ENCODE measurements at regions of chr1 and their contacts with region 1.

Region 1: DNA sequence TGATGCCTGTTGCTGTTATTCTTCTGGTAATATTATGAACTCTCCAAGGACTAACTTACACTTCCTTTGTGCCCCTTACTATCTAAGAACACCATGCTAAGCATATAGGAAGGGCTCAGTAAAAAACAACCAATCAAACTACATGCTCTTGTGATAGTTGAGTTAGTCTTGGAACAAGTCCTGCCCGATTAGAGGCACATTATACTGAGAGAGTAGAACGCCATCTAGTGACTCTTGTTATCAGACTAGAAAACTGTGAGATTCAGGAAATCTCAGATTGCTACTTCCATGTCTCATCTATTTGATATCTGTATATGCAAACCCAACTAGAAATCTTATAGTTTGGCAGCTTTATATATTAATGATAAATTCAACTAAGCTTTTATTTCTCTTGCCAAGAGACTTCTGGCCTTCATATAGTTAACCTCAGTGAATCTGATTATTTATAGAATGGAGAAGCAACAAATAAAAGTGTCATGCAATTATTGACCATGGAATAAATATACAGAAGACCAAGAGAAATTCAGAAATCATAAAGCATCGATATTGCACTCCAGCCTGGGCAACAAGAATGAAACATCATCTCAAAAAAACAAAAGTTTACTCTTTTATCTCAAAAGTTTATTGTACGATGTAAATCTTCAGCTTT is 7.8 kb upstream of the SRRM1 start:
- DNase-seq: no peak
- ATAC-seq: peak; percentile 48 to 81 (median 66)
- H3K4me3 ChIP-seq: no peak overlapping the region
- H3K27ac ChIP-seq: no peak overlapping the region
- H3K4me1 ChIP-seq: peaks cover 0 to 3% (median 0%) of the 10 kb centered on the region in 9 donors
- H3K27me3 ChIP-seq: peaks cover 0 to 20% (median 0%) of the 10 kb centered on the region in 7 donors
- CTCF ChIP-seq: peak; percentile 21 to 75 (median 63)

Region 2: GRCh38 chr1:23496490-23497181 is 1138.7 kb before region 1 on chr1:
- intact Hi-C with region 1: loop called in 1 of 10 experiments (anchors 5 kb)
- DNase-seq: no peak
- ATAC-seq: peak in 6 of 8 donors; percentile 18 to 40 (median 30)
- H3K4me3 ChIP-seq: no peak overlapping the region
- H3K27ac ChIP-seq: no peak overlapping the region
- H3K4me1 ChIP-seq: peaks cover 0 to 9% (median 0%) of the 10 kb centered on the region in 9 donors
- H3K27me3 ChIP-seq: no peaks in the 10 kb centered on the region
- CTCF ChIP-seq: no peak

Region 3: DNA sequence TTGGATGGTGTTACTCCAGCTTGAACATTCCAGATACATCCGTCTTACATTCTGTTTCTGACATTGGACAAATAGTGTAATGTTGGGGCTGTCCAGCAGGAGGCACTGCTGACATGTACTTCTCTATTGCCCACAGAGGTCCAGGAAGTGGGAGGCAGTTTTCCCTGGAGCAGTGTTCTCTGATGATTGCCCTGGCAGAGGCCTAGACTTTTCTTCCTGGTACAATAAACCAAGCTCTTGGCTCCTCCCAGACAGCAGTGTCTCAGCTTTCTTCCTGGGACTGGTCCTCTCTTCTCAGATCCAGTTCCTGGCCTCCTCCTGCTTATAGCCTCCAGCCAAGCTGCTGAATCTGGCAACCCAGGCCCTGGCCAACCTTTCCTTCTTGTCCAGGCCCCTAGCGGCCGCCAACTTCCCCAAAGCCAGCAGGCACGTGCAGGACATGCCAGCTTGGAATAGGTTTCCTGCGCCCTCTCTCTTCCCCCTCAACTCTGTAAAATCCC is 433.3 kb before region 1 on chr1:
- intact Hi-C with region 1: loop called in 9 of 10 experiments (anchors 1 to 10 kb)
- DNase-seq: peak; percentile 44 to 79
- ATAC-seq: peak; percentile 68 to 86 (median 72)
- H3K4me3 ChIP-seq: no peak overlapping the region
- H3K27ac ChIP-seq: peak overlapping the region in 1 of 10 donors; percentile 42
- H3K4me1 ChIP-seq: peaks cover 0 to 17% (median 4%) of the 10 kb centered on the region in 9 donors
- H3K27me3 ChIP-seq: peaks cover 0 to 20% (median 0%) of the 10 kb centered on the region in 7 donors
- CTCF ChIP-seq: peak; percentile 57 to 86 (median 77)

Region 4: GRCh38 chr1:24391882-24392603 is 243.3 kb before region 1 on chr1:
- intact Hi-C with region 1: loop called in 3 of 10 experiments (anchors 5 to 10 kb)
- DNase-seq: peak; percentile 48 to 55
- ATAC-seq: peak; percentile 81 to 91 (median 88)
- H3K4me3 ChIP-seq: peak overlapping the region in 7 of 10 donors; percentile 11 to 36 (median 25)
- H3K27ac ChIP-seq: peak overlapping the region in 9 of 10 donors; percentile 57 to 85 (median 78)
- H3K4me1 ChIP-seq: peaks cover 0 to 31% (median 15%) of the 10 kb centered on the region in 9 donors
- H3K27me3 ChIP-seq: no peaks in the 10 kb centered on the region
- CTCF ChIP-seq: peak; percentile 43 to 79 (median 71)

Region 5: DNA sequence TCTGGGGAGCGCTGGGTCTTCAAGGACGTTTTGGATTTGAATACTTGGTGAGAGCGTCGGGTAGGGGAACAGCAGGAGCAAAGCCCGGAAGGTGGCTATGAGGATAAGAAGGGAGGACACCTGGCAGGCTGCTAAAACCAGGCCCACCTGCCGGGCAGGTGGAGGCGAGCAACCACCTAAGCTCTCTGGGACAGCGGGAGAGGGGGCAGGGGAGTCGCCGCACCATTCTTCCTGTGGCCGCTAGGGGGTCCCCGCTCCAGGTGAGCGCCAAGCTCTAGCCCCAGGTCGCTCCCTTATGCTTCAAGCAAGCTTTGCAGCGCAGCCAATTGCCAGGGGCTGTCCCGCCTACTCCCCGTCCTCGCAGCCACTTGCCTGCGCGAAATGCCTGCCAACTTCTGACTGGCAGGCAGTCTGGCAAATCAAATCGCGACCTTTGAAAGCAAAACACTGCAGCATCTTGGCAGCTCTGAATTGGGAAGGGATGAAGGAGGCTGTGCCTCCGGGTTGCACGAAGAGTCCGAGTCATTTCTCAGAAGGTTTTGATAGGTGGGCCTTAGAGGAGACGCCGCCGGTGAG is 219.9 kb before region 1 on chr1 and contains the start of gene NIPAL3:
- intact Hi-C with region 1: loop called in 6 of 10 experiments (anchors 10 kb)
- DNase-seq: peak; percentile 96 to 99
- ATAC-seq: peak; percentile 94 to 98 (median 96)
- H3K4me3 ChIP-seq: peak within 1 kb of the TSS; percentile 50 to 84 (median 74)
- H3K27ac ChIP-seq: peak within 1 kb of the TSS in 8 of 10 donors; percentile 3 to 75 (median 33)
- H3K4me1 ChIP-seq: peaks cover 7 to 51% (median 27%) of the 10 kb centered on the region in 9 donors
- H3K27me3 ChIP-seq: no peaks in the 10 kb centered on the region
- CTCF ChIP-seq: peak; percentile 77 to 83 (median 81)
- total RNA-seq, gene NIPAL3: 21.5 to 44.9 (median 27.2) TPM

Region 6: DNA sequence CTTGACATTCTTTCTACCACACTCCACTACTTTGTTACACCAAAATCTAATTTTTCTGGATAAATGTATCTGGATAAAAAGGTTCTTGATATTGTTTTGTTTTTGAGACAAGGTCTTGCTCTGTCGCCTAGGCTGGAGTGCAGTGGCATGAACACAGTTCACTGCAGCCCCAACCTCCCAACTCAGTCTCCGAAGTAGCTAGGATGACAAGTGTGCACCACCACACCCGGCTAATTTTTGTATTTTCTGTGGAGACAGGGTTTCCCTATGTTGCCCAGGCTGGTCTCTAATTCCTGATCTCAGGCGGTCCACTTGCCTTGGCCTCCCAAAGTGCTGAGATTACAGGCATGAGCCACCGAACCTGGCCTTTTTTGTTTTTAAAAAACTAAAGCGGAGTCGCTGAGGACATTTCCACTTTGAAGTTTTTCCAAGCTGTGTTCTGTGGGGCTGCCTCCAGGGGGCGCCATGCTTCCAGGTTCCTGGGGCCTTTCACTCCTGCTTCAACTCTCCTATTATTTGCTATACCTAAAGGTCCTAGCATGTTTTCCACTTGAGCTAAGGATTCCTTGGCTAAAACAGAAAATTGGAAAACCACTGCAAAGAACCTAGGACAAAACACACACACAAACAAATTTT is 93.5 kb before region 1 on chr1:
- intact Hi-C with region 1: loop called in 9 of 10 experiments (anchors 2 to 10 kb)
- DNase-seq: peak in 1 of 2 donors; percentile 34
- ATAC-seq: no peak
- H3K4me3 ChIP-seq: no peak overlapping the region
- H3K27ac ChIP-seq: no peak overlapping the region
- H3K4me1 ChIP-seq: peaks cover 0 to 6% (median 0%) of the 10 kb centered on the region in 9 donors
- H3K27me3 ChIP-seq: no peaks in the 10 kb centered on the region
- CTCF ChIP-seq: peak; percentile 41 to 69 (median 64)

Region 7: GRCh38 chr1:24735509-24736375 is 100.4 kb after region 1 on chr1:
- intact Hi-C with region 1: no loop called
- DNase-seq: peak; percentile 52 to 84
- ATAC-seq: peak; percentile 82 to 90 (median 88)
- H3K4me3 ChIP-seq: peak overlapping the region in 7 of 10 donors; percentile 5 to 36 (median 32)
- H3K27ac ChIP-seq: peak overlapping the region; percentile 64 to 91 (median 82)
- H3K4me1 ChIP-seq: peaks cover 15 to 47% (median 30%) of the 10 kb centered on the region in 9 donors
- H3K27me3 ChIP-seq: no peaks in the 10 kb centered on the region
- CTCF ChIP-seq: no peak

Region 8: GRCh38 chr1:26049531-26050247 is 1414.4 kb after region 1 on chr1:
- intact Hi-C with region 1: loop called in 1 of 10 experiments (anchors 5 kb)
- DNase-seq: no peak
- ATAC-seq: peak in 6 of 8 donors; percentile 40 to 75 (median 54)
- H3K4me3 ChIP-seq: no peak overlapping the region
- H3K27ac ChIP-seq: peak overlapping the region in 9 of 10 donors; percentile 5 to 68 (median 49)
- H3K4me1 ChIP-seq: peaks cover 0 to 51% (median 18%) of the 10 kb centered on the region in 9 donors
- H3K27me3 ChIP-seq: peaks cover 0 to 77% (median 41%) of the 10 kb centered on the region in 7 donors
- CTCF ChIP-seq: no peak

Measured in heart right ventricle (tissue), 16 donors.